Activated naive CD4-positive, alpha-beta T cell treated with anti-CD3 and anti-CD28 coated beads for 36 hours (primary cell): ENCODE measurements at regions of chr14 and their contacts with region 1.

Region 1: GRCh38 chr14:91228112-91229004 is 16.1 kb downstream of the GPR68 start:
- DNase-seq: peak; percentile 97
- H3K4me3 Mint-ChIP-seq: peak overlapping the region; percentile 58
- H3K27ac Mint-ChIP-seq: peak overlapping the region; percentile 99
- H3K4me1 Mint-ChIP-seq: peaks cover 89% of the 10 kb centered on the region
- H3K27me3 Mint-ChIP-seq: no peaks in the 10 kb centered on the region

Region 2: GRCh38 chr14:91067186-91067585 is 161.2 kb before region 1 on chr14:
- CTCF ChIA-PET with region 1: no interaction called
- intact Hi-C with region 1: loop called (anchors 1 kb)
- DNase-seq: peak; percentile 82
- H3K4me3 Mint-ChIP-seq: no peak overlapping the region
- H3K27ac Mint-ChIP-seq: peak overlapping the region; percentile 88
- H3K4me1 Mint-ChIP-seq: peaks cover 68% of the 10 kb centered on the region
- H3K27me3 Mint-ChIP-seq: no peaks in the 10 kb centered on the region

Region 3: DNA sequence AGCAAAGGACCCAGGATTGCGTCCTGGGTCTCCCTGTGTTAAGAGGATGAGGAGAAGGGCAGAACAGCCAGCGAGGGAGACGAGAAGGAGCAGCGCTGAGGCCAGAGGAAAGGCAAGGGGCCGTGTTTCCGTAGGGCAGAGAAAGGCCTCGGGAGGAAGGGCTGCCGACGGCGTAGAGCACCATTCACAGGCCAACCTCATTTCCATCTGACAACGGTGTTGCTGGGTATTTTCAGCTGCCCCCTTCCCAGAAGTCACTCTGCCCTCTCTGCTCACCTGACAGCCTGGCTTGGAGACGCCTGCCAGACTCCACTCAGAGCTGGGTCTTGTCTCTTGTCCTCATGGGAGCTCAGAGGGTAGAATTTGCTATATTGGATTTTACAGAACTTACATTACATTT is 35.3 kb before region 1 on chr14:
- CTCF ChIA-PET with region 1: no interaction called
- intact Hi-C with region 1: loop called (anchors 1 kb)
- DNase-seq: no peak
- H3K4me3 Mint-ChIP-seq: no peak overlapping the region
- H3K27ac Mint-ChIP-seq: peak overlapping the region; percentile 9
- H3K4me1 Mint-ChIP-seq: peaks cover 19% of the 10 kb centered on the region
- H3K27me3 Mint-ChIP-seq: no peaks in the 10 kb centered on the region

Region 4: GRCh38 chr14:91286530-91286937 is 58.2 kb after region 1 on chr14:
- CTCF ChIA-PET with region 1: interaction called, 7 read pairs
- intact Hi-C with region 1: loop called (anchors 1 kb)
- DNase-seq: peak; percentile 90
- H3K4me3 Mint-ChIP-seq: no peak overlapping the region
- H3K27ac Mint-ChIP-seq: peak overlapping the region; percentile 74
- H3K4me1 Mint-ChIP-seq: peaks cover 4% of the 10 kb centered on the region
- H3K27me3 Mint-ChIP-seq: no peaks in the 10 kb centered on the region

Region 5: GRCh38 chr14:91350813-91351511 is 122.6 kb after region 1 on chr14:
- CTCF ChIA-PET with region 1: no interaction called
- intact Hi-C with region 1: loop called (anchors 1 kb)
- DNase-seq: peak; percentile 82
- H3K4me3 Mint-ChIP-seq: peak overlapping the region; percentile 69
- H3K27ac Mint-ChIP-seq: peak overlapping the region; percentile 95
- H3K4me1 Mint-ChIP-seq: peaks cover 93% of the 10 kb centered on the region
- H3K27me3 Mint-ChIP-seq: no peaks in the 10 kb centered on the region

Region 6: GRCh38 chr14:91872517-91873470 is 644.4 kb after region 1 on chr14:
- CTCF ChIA-PET with region 1: no interaction called
- intact Hi-C with region 1: loop called (anchors 2 kb)
- DNase-seq: peak; percentile 53
- H3K4me3 Mint-ChIP-seq: peak overlapping the region; percentile 57
- H3K27ac Mint-ChIP-seq: peak overlapping the region; percentile 74
- H3K4me1 Mint-ChIP-seq: peaks cover 87% of the 10 kb centered on the region
- H3K27me3 Mint-ChIP-seq: no peaks in the 10 kb centered on the region